IMR-90 (cell line): ENCODE measurements at regions of chr14 and their contacts with region 1.

Region 1: DNA sequence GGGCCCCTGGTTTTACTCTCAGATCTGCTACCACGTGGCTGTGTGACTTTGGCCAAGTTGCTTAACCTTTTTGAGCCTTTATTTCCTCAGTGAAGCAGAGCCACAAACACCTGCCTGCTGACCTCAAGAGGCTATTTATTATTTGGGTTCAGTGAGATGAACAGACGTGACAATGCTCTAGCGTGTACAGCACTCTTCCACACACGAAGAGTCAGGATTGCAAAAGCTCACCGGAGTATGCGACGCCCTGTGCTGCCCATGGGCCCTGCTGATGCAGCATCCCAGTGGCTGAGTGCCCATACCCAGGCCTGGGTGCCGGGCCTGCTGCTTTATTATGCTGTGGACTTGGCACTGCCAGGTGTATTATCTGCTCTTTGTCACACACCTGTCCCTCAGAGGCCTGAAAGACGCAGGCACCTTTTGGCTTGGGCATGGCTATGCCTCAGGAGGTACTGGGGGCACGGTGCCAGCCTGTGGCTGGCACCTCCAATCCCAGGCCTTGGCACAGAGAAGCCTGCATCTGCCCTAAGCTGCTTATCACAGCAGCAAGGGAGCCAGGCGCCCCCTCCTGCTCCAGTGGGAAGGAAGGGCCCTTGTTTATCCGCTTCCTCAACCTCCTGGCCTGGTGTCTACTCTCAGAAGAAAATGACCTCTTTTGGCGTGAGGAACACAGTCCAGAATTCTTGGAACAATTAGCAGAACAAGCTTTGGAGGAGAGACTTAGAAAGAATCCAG is 22.3 kb upstream of the TC2N start:
- DNase-seq: no peak
- ATAC-seq: no peak
- H3K4me3 ChIP-seq: no peak overlapping the region
- H3K27ac ChIP-seq: no peak overlapping the region
- H3K4me1 ChIP-seq: peaks cover 2% of the 10 kb centered on the region; the same call in 1 of the 2 replicates
- H3K27me3 ChIP-seq: no peaks in the 10 kb centered on the region
- CTCF ChIP-seq: no peak
- POLR2A ChIP-seq: no peak
- RAD21 ChIP-seq: no peak

Region 2: GRCh38 chr14:91060351-91061055 is 829.1 kb before region 1 on chr14 and contains the start of gene RPS6KA5:
- CTCF ChIA-PET with region 1: no interaction called
- POLR2A ChIA-PET with region 1: no interaction called
- dilution Hi-C with region 1: no loop called
- in situ Hi-C with region 1: no loop called
- intact Hi-C with region 1: no loop called
- DNase-seq: peak; percentile 100
- ATAC-seq: peak; percentile 95
- H3K4me3 ChIP-seq: peak within 1 kb of the TSS; percentile 68
- H3K27ac ChIP-seq: peak within 1 kb of the TSS; percentile 2; the same call in 1 of the 2 replicates
- H3K4me1 ChIP-seq: no peaks in the 10 kb centered on the region
- H3K27me3 ChIP-seq: no peaks in the 10 kb centered on the region
- CTCF ChIP-seq: no peak
- POLR2A ChIP-seq: peak; percentile 62; the same call in 1 of the 2 replicates
- RAD21 ChIP-seq: no peak
- total RNA-seq, gene RPS6KA5: 0.28 and 0.36 TPM in 2 replicates

Region 3: DNA sequence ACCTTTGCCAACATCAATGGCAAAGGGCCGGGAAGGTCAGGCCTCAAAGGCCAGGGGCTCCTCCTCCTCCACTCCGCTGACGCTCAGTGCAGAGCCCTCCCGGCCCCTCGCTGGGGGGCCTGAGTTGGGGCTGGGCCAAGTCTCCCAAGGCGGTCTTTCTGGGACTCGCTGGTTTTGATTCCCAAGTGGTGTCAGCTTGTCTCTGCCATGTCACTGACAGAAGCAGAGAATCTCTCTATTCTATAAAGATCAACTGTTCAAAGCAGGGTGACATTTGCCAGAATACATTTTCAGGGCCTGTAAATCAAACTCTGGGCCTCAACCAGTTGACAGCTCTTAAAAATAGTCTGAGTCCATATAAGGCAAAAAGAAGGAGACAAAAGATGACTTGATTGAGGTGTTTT is 547.9 kb before region 1 on chr14:
- CTCF ChIA-PET with region 1: no interaction called
- POLR2A ChIA-PET with region 1: no interaction called
- dilution Hi-C with region 1: no loop called
- in situ Hi-C with region 1: no loop called
- intact Hi-C with region 1: loop called (anchors 5 kb)
- DNase-seq: no peak
- ATAC-seq: no peak
- H3K4me3 ChIP-seq: no peak overlapping the region
- H3K27ac ChIP-seq: no peak overlapping the region
- H3K4me1 ChIP-seq: no peaks in the 10 kb centered on the region
- H3K27me3 ChIP-seq: no peaks in the 10 kb centered on the region; the same call in 1 of the 2 replicates
- CTCF ChIP-seq: no peak
- POLR2A ChIP-seq: no peak
- RAD21 ChIP-seq: no peak

Region 4: GRCh38 chr14:91925001-91925726 is 35.5 kb after region 1 on chr14:
- CTCF ChIA-PET with region 1: no interaction called
- POLR2A ChIA-PET with region 1: no interaction called
- dilution Hi-C with region 1: no loop called
- in situ Hi-C with region 1: no loop called
- intact Hi-C with region 1: no loop called
- DNase-seq: no peak
- ATAC-seq: no peak
- H3K4me3 ChIP-seq: no peak overlapping the region
- H3K27ac ChIP-seq: no peak overlapping the region
- H3K4me1 ChIP-seq: peaks cover 5% of the 10 kb centered on the region
- H3K27me3 ChIP-seq: no peaks in the 10 kb centered on the region
- CTCF ChIP-seq: no peak
- POLR2A ChIP-seq: no peak
- RAD21 ChIP-seq: no peak